ENCODE measurements at regions of chr1 and their contacts with region 1.

Region 1: DNA sequence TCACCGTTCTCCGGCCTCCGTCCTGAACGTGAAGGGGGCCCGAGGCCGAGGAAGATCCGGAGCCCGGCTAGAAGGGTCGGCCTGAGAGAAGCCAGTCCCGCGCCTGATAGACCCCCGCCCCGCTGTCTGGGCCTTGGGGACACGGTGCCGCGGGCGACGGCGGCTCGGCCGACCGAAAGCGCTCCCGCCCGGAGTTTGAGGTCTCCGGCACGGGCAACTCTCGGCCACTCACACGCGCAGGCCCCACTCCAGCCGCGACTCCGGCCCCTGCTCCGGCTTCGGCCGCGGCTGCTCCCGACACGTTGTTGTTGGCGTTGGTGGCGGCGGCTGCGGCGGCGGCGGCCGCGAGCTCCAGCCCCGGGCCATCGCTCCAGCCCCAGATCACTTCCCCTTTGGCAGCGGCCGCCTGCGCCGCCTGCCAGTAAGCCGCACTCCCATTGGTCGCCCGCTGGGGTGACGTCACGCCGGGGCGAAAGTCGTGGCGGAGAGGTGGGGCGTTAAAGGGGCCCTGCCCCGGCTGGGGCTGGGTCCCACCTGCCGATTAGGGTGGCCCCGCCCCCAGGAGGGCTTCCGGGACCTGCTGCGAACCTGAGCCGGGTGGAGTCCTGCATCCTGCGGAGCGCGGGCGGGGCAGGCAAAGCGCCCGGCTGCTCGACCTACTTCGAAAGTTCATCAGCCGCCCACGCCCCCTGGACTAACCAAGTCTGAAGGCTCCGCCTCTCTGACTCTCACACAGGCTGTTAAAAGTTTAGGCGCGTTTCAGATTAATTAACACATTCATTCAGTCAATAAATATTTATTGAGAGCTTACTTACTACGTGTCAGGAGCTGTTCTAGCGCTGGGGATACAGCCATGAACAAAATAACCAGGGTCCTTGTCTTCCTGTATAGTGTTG is at the start of gene EFCAB14:
- DNase-seq: peak; percentile 99
- H3K4me3 Mint-ChIP-seq: peak within 1 kb of the TSS; percentile 92
- H3K27ac Mint-ChIP-seq: peak within 1 kb of the TSS; percentile 84
- H3K4me1 Mint-ChIP-seq: peaks cover 37% of the 10 kb centered on the region
- H3K27me3 Mint-ChIP-seq: no peaks in the 10 kb centered on the region
- total RNA-seq, gene EFCAB14: 35.8 to 38.3 TPM

Region 2: DNA sequence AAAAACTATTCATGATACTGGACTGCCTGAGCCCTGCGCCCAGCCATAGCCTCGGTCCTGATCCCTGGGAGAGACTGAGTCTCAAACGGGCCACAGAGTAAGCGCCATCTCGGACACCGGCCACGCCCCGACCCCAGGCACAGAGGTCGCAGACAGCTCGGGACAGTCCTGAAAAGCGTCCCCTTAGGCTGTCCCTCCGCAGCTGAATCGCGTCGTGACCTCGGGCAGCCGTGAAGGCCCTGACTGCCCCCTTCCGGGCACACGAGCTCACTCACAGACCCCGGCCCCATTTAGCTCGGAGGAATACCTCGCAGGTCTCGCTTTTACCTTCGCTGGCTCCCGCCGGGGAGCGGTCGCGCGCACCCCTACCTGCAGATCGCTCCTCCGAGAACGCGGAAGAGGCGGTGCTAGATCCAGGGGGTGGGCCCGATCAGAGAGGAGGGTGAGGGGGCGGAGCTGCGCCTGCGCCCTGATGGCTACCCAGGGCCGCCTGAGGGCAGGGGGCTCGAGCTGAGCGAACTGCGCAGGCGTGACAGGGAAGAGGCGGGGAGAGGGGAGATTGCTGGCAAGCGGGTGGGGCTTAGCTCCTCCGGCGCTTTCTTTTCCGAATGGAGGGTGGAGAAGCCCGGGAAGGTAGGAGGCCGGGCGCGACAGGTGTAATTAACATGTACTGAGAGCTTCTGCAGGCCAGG is 115.0 kb before region 1 on chr1 and contains the start of gene MKNK1:
- CTCF ChIA-PET with region 1: interaction called, 3 read pairs
- intact Hi-C with region 1: loop called (anchors 1 kb)
- DNase-seq: peak; percentile 98
- H3K4me3 Mint-ChIP-seq: peak within 1 kb of the TSS; percentile 92
- H3K27ac Mint-ChIP-seq: peak within 1 kb of the TSS; percentile 87
- H3K4me1 Mint-ChIP-seq: peaks cover 49% of the 10 kb centered on the region
- H3K27me3 Mint-ChIP-seq: no peaks in the 10 kb centered on the region
- total RNA-seq, gene MKNK1: 18.5 to 21.2 TPM

Region 3: DNA sequence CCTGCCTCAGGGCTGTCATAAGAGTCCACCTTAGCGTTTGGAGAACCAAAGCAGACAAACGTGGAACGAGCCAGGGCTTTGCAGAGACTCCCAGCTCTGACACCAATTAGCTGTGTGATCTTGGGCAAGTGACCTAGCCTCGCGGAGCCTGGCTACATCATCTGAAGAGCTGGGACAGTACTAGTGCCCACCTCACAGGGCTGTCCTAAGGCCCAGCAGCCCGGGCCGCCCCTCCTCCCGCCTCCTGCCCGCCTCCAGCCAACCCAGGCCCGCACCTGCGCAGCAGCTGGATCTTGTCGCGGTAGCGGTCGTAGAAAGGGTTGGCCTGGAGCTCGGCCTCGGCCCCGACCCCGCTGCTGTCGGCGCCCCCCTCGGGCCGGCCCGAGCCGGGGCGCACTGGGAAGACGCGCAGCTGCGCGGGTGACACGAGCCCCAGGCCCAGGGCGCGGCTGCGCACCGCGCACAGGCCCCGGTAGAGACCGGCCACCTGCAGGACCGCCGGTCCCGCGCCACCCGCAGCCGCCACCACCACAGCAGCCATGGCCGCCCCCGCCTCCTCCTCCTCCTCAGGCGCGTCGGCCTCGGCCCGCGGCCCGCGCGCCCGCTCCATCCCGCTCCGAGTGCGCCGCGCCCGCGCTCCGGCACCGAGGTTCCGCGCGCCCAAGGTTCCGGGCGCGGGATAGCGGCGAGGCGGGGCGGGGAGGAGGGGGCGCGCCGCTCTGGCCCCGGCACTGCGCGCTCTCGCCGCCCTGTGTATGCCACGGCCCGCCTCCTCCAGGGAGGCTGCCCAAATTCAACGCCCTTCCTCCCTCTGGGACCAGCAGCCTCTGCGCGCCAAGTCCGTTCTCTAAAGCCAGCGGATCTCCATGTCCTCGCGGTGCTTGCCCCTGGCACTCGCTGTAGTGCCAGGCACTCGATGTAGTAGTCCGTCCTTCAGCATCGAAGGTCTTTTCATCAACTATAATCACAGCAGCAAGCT is 50.9 kb before region 1 on chr1 and contains the start of gene ATPAF1:
- CTCF ChIA-PET with region 1: no interaction called
- intact Hi-C with region 1: loop called (anchors 1 kb)
- DNase-seq: peak; percentile 83
- H3K4me3 Mint-ChIP-seq: no peak within 1 kb of the TSS
- H3K27ac Mint-ChIP-seq: peak within 1 kb of the TSS; percentile 9
- H3K4me1 Mint-ChIP-seq: peaks cover 15% of the 10 kb centered on the region
- H3K27me3 Mint-ChIP-seq: no peaks in the 10 kb centered on the region
- total RNA-seq, gene ATPAF1: 44.5 to 49.2 TPM

Region 4: DNA sequence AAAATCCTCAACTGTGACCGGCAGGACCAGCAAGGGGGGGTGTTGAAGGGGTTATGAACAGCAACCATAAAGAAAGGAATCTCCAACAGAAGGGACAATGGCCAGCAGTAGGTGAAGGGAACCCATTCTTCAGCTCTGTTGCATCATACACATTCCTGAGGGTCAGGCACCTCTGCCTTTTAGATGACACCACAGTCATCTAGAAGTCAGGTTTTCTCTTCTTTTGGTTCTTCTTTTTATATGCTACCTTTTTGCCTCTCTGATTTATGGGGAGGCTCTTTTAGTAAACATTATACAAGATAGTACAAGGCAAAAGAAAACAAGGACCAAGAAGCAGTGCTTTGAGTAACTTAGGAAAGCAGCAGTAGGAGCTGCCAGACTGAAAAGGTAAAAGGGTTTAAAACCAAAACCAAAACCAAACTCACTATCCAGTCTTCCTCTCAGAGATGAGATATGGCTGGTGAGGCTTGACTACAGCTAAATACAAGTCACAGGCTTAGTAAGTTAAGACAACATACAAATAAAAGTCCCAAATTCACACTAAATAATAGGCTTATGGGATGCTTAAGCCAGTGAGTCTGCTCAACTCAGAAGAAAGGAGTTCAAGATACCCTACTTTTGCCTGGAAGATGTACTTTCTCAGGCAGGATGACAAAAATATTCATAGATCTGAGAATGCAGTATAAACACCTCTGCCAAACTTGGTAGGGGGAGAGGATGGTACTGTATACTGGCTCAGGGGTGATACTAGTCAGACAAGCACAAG is 43.2 kb before region 1 on chr1:
- CTCF ChIA-PET with region 1: no interaction called
- intact Hi-C with region 1: loop called (anchors 2 kb)
- DNase-seq: no peak
- H3K4me3 Mint-ChIP-seq: peak overlapping the region; percentile 27
- H3K27ac Mint-ChIP-seq: peak overlapping the region; percentile 95
- H3K4me1 Mint-ChIP-seq: peaks cover 35% of the 10 kb centered on the region
- H3K27me3 Mint-ChIP-seq: no peaks in the 10 kb centered on the region

Region 5: DNA sequence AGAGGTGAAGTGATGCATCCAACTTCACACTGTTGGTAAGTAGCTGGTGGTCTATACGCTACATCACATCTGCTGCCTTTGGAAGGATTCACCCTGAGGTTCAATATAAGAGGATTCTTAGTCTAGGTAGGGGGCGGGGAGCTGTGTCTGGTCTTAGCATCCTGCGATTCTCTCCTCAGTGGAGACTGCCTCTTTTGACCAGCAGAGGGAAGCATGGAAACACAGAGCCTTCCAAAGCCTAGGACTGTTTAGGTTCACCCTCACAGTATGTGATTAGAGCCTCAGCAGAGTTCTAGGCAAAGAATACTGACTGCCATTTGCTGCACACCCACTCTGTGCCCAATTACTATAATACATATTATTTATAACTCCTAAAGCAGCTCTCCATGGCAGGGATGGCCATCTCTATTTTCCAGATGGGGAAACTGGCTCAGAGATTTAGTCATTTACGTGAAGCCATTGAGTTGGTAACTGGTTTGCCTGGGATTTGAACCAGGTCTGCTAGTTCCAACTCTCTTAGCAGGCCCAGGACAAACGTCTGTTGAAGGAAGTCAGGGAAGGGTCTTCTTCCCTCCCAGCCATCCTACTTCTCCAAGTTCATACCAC is 28.8 kb after region 1 on chr1:
- CTCF ChIA-PET with region 1: no interaction called
- intact Hi-C with region 1: no loop called
- DNase-seq: peak; percentile 16
- H3K4me3 Mint-ChIP-seq: no peak overlapping the region
- H3K27ac Mint-ChIP-seq: no peak overlapping the region
- H3K4me1 Mint-ChIP-seq: no peaks in the 10 kb centered on the region
- H3K27me3 Mint-ChIP-seq: peaks cover 32% of the 10 kb centered on the region